ENCODE measurements at regions of chr10 and their contacts with region 1.

Region 1: DNA sequence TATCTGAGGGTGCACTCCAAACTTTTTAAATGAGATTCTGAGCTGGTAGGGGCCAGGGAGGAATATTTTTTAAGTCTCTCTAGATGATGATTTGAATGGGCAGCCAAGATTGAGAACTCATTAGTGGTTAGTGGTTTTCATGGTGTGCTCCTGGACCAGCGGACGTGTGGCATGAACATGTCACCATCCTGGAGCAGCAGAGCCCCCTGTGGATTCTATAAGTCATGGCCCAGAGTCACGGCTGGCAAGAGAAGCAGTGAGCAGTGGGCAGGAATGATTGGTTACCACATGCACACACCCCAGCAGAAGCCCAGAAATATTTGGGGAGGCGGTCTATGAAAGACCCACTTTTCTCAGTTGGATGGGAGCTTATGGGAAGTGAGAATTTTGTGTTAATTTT is 21.2 kb upstream of the UCN3 start:
- DNase-seq: peak in 2 of 9 experiments; percentile 33 to 38
- ATAC-seq: no peak
- H3K4me3 ChIP-seq: no peak overlapping the region
- H3K4me3 Mint-ChIP-seq: no peak overlapping the region
- H3K27ac ChIP-seq: no peak overlapping the region
- H3K27ac Mint-ChIP-seq: no peak overlapping the region
- H3K4me1 ChIP-seq: no peaks in the 10 kb centered on the region
- H3K4me1 Mint-ChIP-seq: no peaks in the 10 kb centered on the region
- H3K27me3 ChIP-seq: no peaks in the 10 kb centered on the region
- H3K27me3 Mint-ChIP-seq: peaks cover 2% of the 10 kb centered on the region
- CTCF ChIP-seq: no peak

Region 2: GRCh38 chr10:5094265-5095205 is 249.0 kb before region 1 on chr10 and contains the start of gene AKR1C3:
- CTCF ChIA-PET with region 1: interaction called, 3 read pairs
- POLR2A ChIA-PET with region 1: no interaction called
- intact Hi-C with region 1: loop called in 1 of 2 experiments (anchors 5 kb)
- DNase-seq: peak in 2 of 9 experiments; percentile 48 to 51
- ATAC-seq: peak; percentile 77
- H3K4me3 ChIP-seq: peak within 1 kb of the TSS; percentile 44 to 50
- H3K4me3 Mint-ChIP-seq: peak within 1 kb of the TSS; percentile 80
- H3K27ac ChIP-seq: peak within 1 kb of the TSS in 1 of 2 experiments; percentile 34
- H3K27ac Mint-ChIP-seq: peak within 1 kb of the TSS; percentile 3
- H3K4me1 ChIP-seq: peaks cover 3% of the 10 kb centered on the region
- H3K4me1 Mint-ChIP-seq: peaks cover 6% of the 10 kb centered on the region
- H3K27me3 ChIP-seq: no peaks in the 10 kb centered on the region
- H3K27me3 Mint-ChIP-seq: no peaks in the 10 kb centered on the region
- CTCF ChIP-seq: peak; percentile 48
- total RNA-seq, gene AKR1C3: 0.53 to 0.57 TPM

Region 3: GRCh38 chr10:5293691-5294550 is 49.6 kb before region 1 on chr10:
- CTCF ChIA-PET with region 1: interaction called, 3 read pairs
- POLR2A ChIA-PET with region 1: no interaction called
- intact Hi-C with region 1: loop called in 1 of 2 experiments (anchors 10 kb)
- DNase-seq: peak in 8 of 9 experiments; percentile 34 to 70 (median 58)
- ATAC-seq: peak; percentile 58
- H3K4me3 ChIP-seq: peak overlapping the region; percentile 3 to 48
- H3K4me3 Mint-ChIP-seq: peak overlapping the region; percentile 88
- H3K27ac ChIP-seq: peak overlapping the region; percentile 44 to 71
- H3K27ac Mint-ChIP-seq: peak overlapping the region; percentile 100
- H3K4me1 ChIP-seq: peaks cover 62% of the 10 kb centered on the region
- H3K4me1 Mint-ChIP-seq: peaks cover 79% of the 10 kb centered on the region
- H3K27me3 ChIP-seq: no peaks in the 10 kb centered on the region
- H3K27me3 Mint-ChIP-seq: no peaks in the 10 kb centered on the region
- CTCF ChIP-seq: peak; percentile 27

Region 4: DNA sequence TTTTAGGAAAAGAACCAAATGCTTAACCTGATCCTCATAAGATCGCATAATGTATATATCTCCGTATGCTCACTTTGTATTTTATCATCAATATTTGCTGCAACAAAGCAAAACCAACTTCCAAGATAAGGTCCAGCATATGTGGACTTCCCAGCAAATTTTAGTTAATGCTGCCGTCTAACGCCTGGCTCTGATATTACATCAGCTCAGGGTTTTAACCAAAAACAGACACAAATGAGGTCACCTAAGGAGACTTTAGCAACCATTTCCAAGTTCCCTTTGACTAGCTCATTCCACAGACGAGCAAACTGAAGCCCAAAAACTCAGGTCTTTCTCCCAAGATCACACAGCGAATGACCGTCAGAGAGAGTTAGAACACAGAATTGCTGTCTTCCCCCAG is 38.2 kb before region 1 on chr10:
- CTCF ChIA-PET with region 1: no interaction called
- POLR2A ChIA-PET with region 1: no interaction called
- intact Hi-C with region 1: no loop called
- DNase-seq: no peak
- ATAC-seq: no peak
- H3K4me3 ChIP-seq: no peak overlapping the region
- H3K4me3 Mint-ChIP-seq: no peak overlapping the region
- H3K27ac ChIP-seq: no peak overlapping the region
- H3K27ac Mint-ChIP-seq: no peak overlapping the region
- H3K4me1 ChIP-seq: no peaks in the 10 kb centered on the region
- H3K4me1 Mint-ChIP-seq: no peaks in the 10 kb centered on the region
- H3K27me3 ChIP-seq: no peaks in the 10 kb centered on the region
- H3K27me3 Mint-ChIP-seq: no peaks in the 10 kb centered on the region
- CTCF ChIP-seq: no peak